ENCODE measurements at regions of chr9 and their contacts with region 1.

Region 1: DNA sequence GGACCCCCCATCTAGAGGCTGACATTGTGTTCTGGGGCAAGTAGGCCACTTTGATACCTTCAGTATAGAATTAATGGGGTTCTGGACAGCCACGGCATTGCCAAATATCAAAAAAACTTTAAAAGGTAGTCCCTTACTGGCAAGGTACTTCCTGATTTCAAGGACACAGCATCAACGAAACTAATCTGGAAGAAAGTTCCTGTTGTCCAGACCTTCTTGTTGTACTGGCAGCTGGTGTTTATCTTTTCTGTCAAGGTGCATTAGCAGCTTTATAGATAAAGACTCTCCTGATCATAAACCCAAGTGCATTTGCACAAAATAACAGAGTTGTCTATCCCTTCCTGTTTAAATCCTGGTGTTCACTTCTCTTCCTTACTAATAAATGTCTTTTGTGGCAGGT is 23.7 kb upstream of the GOLGA1 start:
- DNase-seq: no peak
- H3K4me3 ChIP-seq: peak overlapping the region; percentile 10
- H3K4me3 Mint-ChIP-seq: peak overlapping the region in 2 of 7 donors; percentile 23 to 34
- H3K27ac ChIP-seq: no peak overlapping the region
- H3K27ac Mint-ChIP-seq: peak overlapping the region; percentile 72 to 93 (median 81)
- H3K4me1 ChIP-seq: peaks cover 27% of the 10 kb centered on the region
- H3K4me1 Mint-ChIP-seq: peaks cover 34 to 41% (median 38%) of the 10 kb centered on the region in 3 donors
- H3K27me3 ChIP-seq: no peaks in the 10 kb centered on the region
- H3K27me3 Mint-ChIP-seq: no peaks in the 10 kb centered on the region

Region 2: DNA sequence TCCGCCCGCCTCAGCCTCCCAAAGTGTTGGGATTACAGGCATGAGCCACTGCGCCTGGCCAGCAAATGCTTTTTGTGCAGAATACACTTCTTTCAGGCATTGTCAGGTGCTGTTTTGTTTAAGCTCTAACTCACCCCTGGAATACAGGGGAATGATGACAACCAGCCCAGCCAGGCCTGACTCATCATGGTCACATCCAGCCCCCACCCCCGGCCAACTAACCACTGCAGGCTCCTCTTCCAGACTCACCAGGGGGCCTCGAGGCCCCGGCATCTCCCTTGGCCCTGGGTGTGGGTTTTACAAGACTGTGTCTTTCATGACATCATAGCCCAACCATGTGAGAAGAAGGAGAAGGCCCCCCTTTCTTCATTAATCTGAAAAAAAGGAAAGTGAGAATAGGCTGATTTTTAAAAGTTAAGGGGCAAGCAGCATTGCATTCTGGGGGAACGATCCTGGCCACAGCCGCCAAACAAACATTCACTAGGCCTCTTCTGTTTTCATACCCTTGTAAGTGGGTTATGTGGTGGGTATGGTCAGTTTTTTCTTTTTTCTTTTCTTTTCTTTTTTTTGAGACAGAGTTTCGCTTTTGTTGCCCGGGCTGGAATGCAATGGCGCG is 152.1 kb before region 1 on chr9:
- CTCF ChIA-PET with region 1: no interaction called
- POLR2A ChIA-PET with region 1: no interaction called
- DNase-seq: no peak
- H3K4me3 ChIP-seq: no peak overlapping the region
- H3K4me3 Mint-ChIP-seq: no peak overlapping the region
- H3K27ac ChIP-seq: no peak overlapping the region
- H3K27ac Mint-ChIP-seq: no peak overlapping the region
- H3K4me1 ChIP-seq: no peaks in the 10 kb centered on the region
- H3K4me1 Mint-ChIP-seq: no peaks in the 10 kb centered on the region
- H3K27me3 ChIP-seq: no peaks in the 10 kb centered on the region
- H3K27me3 Mint-ChIP-seq: peaks cover 6 to 15% of the 10 kb centered on the region in 2 donors

Region 3: DNA sequence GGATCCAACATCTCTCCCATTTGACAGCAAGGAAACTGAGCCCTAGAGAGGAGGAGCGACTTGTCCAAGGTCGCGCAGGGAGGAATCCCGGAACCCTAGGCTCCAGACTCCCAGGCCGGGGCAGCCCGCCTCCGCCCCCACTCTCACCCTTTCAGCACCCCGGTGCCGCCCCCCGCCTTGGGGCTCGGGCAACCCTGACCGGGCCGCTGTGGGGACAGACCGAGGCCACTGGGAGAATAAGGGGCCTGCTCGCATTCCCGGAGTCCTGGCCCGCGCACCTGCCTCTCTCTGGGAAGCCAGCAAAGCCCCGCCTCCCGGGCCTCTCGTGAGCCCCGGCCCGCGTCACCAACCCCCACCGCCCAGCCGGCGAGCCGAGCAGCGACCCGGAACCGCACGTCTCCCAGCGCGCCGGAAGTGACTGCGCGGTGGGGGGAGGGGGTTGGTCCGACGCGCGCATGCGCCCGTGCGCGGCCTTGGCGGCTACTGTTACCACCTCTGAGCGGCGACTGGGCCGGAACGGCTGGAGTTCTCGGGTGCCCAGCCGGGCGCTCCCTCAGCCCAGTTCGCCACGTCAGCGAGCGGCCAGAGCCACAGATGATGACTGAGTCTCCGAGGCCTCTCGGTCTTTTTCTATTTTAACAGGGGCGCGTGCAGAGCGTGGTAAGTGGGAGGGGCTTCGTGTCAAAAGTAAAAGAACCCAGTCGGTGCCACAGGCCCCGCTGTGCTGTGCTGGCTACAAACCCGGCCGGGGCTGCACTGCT is 23.7 kb before region 1 on chr9 and contains the start of gene GOLGA1:
- CTCF ChIA-PET with region 1: interaction called, 5 read pairs
- POLR2A ChIA-PET with region 1: interaction called, 20 read pairs
- DNase-seq: peak; percentile 93 to 96 (median 94)
- H3K4me3 ChIP-seq: peak within 1 kb of the TSS; percentile 91
- H3K4me3 Mint-ChIP-seq: peak within 1 kb of the TSS; percentile 82 to 99 (median 90)
- H3K27ac ChIP-seq: peak within 1 kb of the TSS; percentile 93
- H3K27ac Mint-ChIP-seq: peak within 1 kb of the TSS; percentile 85 to 100 (median 98)
- H3K4me1 ChIP-seq: peaks cover 16% of the 10 kb centered on the region
- H3K4me1 Mint-ChIP-seq: peaks cover 27 to 32% (median 31%) of the 10 kb centered on the region in 3 donors
- H3K27me3 ChIP-seq: no peaks in the 10 kb centered on the region
- H3K27me3 Mint-ChIP-seq: peaks cover 0 to 2% of the 10 kb centered on the region in 2 donors
- total RNA-seq, gene GOLGA1: 17.1 to 21.1 TPM

Region 4: DNA sequence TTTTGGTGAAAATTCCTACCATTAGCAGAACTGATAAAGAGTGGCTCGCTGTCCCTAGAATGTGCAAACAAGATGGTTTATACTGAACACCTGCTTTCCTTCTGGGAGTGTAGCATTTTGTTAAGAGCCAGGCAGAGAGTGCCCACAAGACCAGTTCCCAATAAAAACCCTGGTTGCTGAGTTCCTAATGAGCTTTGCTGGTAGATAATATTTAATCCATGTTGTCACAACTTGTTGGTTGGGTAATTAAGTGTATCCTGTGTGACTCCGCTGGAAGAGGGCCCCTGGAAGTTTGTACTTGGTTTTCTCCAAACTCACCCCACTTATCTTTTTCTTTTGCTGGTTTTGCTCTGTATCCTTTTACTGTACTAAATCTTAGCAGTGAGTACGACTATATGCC is 15.8 kb after region 1 on chr9:
- CTCF ChIA-PET with region 1: no interaction called
- POLR2A ChIA-PET with region 1: no interaction called
- DNase-seq: no peak
- H3K4me3 ChIP-seq: no peak overlapping the region
- H3K4me3 Mint-ChIP-seq: no peak overlapping the region
- H3K27ac ChIP-seq: no peak overlapping the region
- H3K27ac Mint-ChIP-seq: no peak overlapping the region
- H3K4me1 ChIP-seq: no peaks in the 10 kb centered on the region
- H3K4me1 Mint-ChIP-seq: no peaks in the 10 kb centered on the region
- H3K27me3 ChIP-seq: no peaks in the 10 kb centered on the region
- H3K27me3 Mint-ChIP-seq: no peaks in the 10 kb centered on the region

Region 5: DNA sequence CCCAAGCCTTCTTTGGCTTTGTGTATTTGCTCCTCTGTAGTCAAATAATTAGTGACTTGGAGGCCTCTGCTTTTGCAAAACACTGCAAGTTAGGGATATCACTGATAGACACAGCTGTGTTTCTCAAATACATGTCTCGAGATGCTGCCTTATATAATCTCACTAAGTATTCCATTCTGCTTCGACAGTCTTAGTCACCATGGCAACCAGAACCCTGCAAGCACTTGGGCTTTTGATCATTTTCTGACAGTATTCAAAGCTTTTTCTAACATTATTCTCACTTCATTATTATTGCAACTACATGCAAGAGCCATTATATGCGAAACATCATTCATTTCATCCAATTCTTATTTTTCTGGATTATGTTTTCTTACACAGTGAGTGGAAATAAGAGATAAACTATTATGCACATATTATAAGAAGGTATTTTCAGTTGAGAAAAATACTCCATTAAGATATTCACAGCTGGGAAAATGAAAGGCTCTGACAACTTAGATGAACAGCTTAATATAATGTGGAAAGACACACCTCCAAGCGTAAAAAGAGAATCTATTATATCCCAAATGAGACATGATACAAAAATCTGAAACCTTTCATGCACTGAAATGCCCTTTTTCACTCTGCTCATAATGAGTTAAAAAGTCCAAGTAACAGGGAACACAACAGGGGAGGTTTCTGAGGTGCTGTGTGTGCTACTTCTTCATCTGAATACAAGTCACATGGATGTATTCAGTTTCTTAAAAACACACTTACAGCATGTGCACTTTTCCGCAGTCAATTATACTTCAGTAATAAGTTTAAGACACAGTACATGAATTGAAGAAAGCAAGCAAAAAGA is 84.8 kb after region 1 on chr9:
- CTCF ChIA-PET with region 1: no interaction called
- POLR2A ChIA-PET with region 1: no interaction called
- DNase-seq: no peak
- H3K4me3 ChIP-seq: no peak overlapping the region
- H3K4me3 Mint-ChIP-seq: no peak overlapping the region
- H3K27ac ChIP-seq: no peak overlapping the region
- H3K27ac Mint-ChIP-seq: no peak overlapping the region
- H3K4me1 ChIP-seq: no peaks in the 10 kb centered on the region
- H3K4me1 Mint-ChIP-seq: no peaks in the 10 kb centered on the region
- H3K27me3 ChIP-seq: no peaks in the 10 kb centered on the region
- H3K27me3 Mint-ChIP-seq: no peaks in the 10 kb centered on the region